ENCODE measurements at regions of chr17 and their contacts with region 1.

Region 1: GRCh38 chr17:50626037-50626574 is 8.6 kb upstream of the ABCC3 start:
- DNase-seq: peak; percentile 91

Region 2: DNA sequence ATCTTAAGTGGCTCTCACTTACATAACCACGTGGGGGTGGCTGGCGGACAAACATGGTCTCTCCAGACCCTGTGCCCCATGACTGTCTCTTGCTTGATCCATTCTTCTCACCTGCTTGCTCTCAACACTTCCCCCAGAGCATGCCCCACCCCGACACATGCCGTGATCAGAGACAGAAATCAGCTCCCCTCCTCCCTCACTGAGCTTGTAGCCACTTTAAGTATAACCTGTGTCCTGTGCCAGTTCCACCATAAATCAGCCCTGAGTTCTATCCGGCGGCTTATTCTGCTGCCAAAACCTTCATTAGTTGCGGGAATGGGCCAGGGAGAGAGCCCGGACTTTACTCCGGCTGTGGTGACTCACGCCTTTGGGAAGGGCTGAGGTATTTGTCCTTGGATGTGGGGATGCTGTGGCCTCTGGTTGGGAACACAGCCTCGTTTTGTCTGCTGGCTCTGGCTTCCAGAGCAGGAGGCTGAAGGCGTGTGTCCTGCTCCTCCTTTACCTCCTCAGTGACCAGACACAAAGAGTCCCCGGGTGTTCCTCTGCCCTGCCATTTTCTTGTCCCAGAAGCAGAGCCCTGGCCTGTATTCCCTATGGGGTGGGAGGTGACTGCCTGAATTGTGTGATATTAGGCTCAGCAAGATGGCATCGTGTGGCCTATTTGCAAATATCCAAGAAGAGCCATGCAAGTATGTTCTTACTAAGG is 60.5 kb after region 1 on chr17:
- intact Hi-C with region 1: loop called in 1 of 2 experiments (anchors 5 kb)
- DNase-seq: peak; percentile 94

Region 3: DNA sequence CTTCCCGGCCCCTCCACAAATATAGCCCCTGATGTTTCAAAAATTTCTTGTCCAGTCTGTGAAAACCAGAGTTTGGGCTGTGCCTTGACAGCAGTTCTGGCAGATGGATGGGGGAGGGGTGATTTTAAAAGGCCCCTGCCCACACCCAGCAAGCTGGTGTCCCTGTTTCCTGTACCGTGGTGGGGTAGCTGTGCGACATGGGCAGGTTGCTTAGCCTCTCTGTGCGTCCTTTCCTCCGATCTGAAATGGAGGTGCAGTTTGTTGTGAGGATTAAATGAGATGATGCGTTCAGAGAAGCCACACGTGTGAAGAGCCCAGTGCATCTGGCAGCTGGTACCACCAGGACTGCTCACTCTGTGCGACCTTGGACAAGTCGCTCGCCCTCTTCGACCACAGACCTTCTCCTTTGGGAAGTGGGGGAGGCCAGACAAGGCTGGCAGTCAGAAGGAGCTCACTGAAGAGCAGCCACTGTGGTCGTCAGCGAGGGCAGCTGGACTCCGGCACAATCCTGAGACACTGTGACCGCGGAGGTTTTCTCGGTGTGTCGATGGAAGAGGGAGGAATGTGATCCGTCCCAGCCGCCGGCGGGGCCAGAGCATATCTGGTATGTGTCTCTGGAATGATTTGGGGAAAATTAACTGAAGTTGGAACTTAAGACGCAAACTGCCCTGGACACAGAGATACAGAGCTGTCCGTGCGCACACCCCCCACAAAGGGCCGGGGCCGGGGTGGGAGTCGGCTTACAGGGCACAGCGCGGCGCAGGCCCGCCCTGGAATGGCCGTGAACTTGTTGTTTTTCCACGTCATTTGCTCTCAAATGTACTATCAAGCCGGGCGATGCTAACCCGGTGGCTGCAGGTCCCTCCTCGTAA is 208.6 kb after region 1 on chr17:
- intact Hi-C with region 1: loop called in 1 of 2 experiments (anchors 5 kb)
- DNase-seq: no peak